ENCODE measurements at regions of chr11 and their contacts with region 1.

Region 1: GRCh38 chr11:128701086-128701485 is 7.2 kb downstream of the FLI1 start:
- DNase-seq: no peak
- H3K4me3 ChIP-seq: no peak overlapping the region
- CTCF ChIP-seq: no peak

Region 2: DNA sequence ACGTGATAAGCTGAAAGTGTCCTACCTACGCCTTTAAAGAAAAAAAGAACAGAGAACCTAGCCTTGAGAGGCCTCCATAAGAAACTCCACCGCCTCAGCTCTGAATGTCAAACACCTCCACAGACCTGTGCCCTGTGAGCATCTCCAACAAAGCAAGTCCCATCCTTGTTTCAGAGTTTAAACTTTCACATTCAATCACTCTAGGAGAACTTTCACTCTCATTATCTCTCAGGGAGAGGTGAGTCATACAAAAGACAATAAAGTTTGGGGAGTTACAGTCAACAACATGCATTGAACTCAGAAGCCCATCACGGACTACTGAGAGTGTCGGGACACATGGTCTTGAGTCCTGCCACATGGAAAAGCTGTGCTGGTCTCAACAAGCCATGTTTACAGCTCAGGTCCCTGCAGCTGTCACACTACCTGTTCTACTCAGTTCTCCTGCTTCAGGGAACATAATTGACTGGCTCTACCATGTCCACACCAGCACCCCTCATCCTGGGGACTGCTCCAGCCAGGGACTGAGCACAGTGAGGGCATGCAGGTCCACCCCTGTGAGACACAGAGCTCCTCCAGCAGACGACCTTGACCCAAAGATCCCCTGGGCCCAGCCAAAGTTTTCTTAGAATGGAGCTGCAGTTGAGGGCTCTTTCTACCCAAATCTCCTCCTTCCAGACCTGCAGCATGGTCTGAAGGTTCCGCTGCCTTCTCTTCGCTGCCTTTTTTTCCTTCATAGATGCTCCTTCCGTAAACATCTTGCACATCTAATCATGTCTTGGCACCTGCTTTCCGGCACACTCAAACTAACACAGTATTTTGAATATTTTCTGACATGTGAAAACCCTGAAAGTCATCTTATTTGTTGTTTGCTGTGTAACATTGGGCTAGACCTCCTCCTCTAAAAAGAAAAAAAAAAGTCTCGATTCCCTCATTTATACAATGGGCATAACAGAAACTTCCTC is 228.7 kb before region 1 on chr11:
- CTCF ChIA-PET with region 1: no interaction called
- POLR2A ChIA-PET with region 1: no interaction called
- DNase-seq: no peak
- H3K4me3 ChIP-seq: no peak overlapping the region
- CTCF ChIP-seq: no peak

Region 3: GRCh38 chr11:128684549-128685401 is 16.3 kb before region 1 on chr11:
- CTCF ChIA-PET with region 1: no interaction called
- POLR2A ChIA-PET with region 1: no interaction called
- DNase-seq: no peak
- H3K4me3 ChIP-seq: no peak overlapping the region
- CTCF ChIP-seq: no peak

Region 4: DNA sequence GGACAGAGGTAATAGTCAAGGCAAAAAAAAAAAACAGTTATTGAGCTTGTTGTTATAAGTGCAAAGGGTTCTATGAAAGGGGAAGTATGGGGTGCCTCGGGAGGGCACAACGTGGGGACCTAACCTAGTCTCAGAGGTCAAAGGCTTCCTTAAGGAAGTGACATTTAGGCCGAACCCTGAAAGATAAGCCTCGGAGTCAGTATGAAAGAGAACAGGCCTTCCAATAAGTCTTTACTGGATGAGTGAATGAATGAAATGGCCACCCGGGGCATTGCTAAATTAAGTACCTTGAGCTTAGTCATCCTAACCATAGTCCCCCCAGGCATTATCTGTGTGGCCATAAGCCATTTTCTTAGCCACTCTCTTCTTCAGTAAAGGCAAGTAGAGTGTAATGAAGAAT is 12.5 kb after region 1 on chr11:
- CTCF ChIA-PET with region 1: interaction called, 10 read pairs
- POLR2A ChIA-PET with region 1: no interaction called
- DNase-seq: no peak
- H3K4me3 ChIP-seq: no peak overlapping the region
- CTCF ChIP-seq: no peak